ENCODE measurements at regions of chr1 and their contacts with region 1.

Region 1: DNA sequence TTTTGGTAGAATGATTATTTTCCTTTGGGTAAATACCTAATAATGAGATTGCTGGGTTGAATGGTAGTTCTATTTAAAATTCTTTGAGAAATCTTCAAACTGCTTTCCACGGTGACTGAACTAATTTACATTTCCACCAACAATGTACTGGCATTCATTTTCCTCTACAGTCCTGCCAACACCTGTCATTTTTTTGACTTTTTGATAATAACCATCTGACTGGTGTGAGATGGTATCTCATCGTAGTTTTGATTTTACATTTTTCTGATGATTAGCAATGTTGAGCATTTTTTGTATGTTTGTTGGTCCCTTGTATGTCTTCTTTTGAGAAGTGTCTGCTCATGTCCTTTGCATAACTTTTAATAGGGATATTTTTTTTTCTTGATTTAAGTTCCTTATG is 23.5 kb downstream of the KCNK2 start:
- DNase-seq: no peak
- ATAC-seq: no peak
- H3K4me3 ChIP-seq: no peak overlapping the region
- H3K27ac ChIP-seq: no peak overlapping the region
- H3K4me1 ChIP-seq: no peaks in the 10 kb centered on the region
- H3K27me3 ChIP-seq: no peaks in the 10 kb centered on the region
- CTCF ChIP-seq: no peak
- EP300 ChIP-seq: no peak
- POLR2A ChIP-seq: no peak
- RAD21 ChIP-seq: no peak

Region 2: DNA sequence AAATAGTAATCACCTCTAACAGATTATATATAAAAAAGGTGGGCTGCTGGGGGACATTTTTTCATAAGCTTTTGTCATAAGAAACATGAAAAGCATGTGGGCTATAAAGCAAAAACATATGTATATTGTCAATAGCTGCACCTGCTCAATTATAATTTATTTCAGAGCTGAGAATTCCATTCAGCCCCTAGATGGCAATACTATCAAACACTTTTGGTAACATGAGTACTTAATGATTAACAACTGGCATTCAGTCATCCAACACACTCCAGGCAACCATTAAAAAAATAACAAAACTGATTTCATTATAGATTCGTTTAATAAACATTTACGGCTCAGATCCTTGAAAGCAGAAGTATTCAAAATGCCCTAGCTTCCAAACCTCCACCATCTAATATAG is 576.2 kb after region 1 on chr1:
- CTCF ChIA-PET with region 1: no interaction called
- POLR2A ChIA-PET with region 1: no interaction called
- RAD21 ChIA-PET with region 1: no interaction called
- SMC1A ChIA-PET with region 1: no interaction called
- in situ Hi-C with region 1: no loop called
- intact Hi-C with region 1: loop called (anchors 2 kb)
- DNase-seq: no peak
- ATAC-seq: 0 out of 3 replicates have a peak, but pooled peaks have one; percentile 38
- H3K4me3 ChIP-seq: no peak overlapping the region
- H3K27ac ChIP-seq: no peak overlapping the region
- H3K4me1 ChIP-seq: no peaks in the 10 kb centered on the region
- H3K27me3 ChIP-seq: no peaks in the 10 kb centered on the region
- CTCF ChIP-seq: no peak; a peak in 1 of 6 replicates
- EP300 ChIP-seq: no peak
- POLR2A ChIP-seq: no peak
- RAD21 ChIP-seq: no peak